ENCODE measurements at regions of chrX and their contacts with region 1.

Region 1: GRCh38 chrX:9885150-9885549 is 82.0 kb upstream of the CLDN34 start:
- DNase-seq: no peak
- H3K4me3 ChIP-seq: no peak overlapping the region
- CTCF ChIP-seq: peak; percentile 70

Region 2: DNA sequence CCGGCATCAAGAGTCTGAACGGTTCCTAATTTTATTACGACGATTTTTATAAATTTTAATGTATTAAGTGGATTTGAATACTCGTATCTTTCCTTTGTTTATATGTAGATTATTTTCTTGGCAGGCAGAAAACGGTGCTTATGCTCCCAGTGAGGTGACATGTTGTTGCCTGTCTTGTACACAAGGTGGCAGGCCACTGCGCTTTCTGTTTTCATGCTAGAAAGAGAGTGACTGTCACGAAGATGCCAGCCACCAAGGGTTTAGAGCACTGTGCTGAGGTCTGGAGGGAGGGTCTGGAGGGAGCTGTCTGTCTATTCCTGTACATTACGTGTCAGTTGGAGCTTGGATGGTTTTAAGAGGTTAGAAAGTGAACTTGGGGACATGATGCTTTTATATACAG is 11.2 kb before region 1 on chrX:
- CTCF ChIA-PET with region 1: interaction called, 16 read pairs
- POLR2A ChIA-PET with region 1: no interaction called
- DNase-seq: no peak
- H3K4me3 ChIP-seq: no peak overlapping the region
- CTCF ChIP-seq: peak; percentile 41

Region 3: DNA sequence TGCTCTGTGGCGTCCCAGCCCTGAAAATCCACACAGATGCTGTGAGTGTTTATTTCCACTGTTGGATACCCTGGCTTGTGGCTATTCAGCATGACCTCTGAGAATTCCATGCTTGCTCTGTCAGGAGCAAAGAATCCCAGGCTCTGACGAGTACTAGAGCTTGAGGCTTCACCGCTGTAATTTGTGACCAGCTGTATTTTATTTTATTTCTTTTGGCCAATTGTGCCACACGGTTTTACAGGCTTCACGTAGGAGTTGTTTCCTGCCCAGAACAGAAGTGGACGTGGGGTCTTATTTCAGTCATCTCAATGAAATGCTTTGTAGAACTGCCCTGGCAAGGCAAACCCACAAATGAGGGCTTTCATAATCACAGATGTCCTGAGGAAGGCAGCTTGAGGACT is 12.6 kb after region 1 on chrX:
- CTCF ChIA-PET with region 1: interaction called, 14 read pairs
- POLR2A ChIA-PET with region 1: no interaction called
- DNase-seq: peak; percentile 88
- H3K4me3 ChIP-seq: no peak overlapping the region
- CTCF ChIP-seq: no peak